GM12878 (cell line): ENCODE measurements at regions of chr12 and their contacts with region 1.

Region 1: DNA sequence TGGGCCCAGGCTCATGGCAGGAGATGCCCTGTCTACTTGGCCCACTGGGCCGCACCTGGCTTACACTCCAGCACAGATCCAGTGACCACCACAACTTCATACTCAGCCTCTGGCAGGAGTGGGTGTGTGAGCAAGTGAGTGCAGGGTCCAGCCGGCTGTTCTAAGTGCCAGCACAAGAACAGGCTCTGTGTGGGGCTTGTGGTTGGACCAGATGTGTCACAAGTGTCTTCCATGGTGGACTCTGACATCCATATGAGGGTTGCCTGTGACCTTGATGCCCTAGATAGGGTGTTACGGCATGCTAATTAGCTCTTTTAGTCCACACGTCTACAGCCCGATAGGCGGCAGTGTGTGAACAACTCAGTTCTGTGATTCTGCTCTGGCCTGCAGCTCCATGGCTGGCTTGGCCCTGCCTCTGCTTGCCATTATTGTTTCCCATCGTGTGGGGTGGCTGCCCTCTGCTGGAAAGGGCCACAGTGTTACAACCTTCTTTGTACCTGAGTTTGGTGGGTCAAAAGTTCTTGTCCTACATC is 1089.1 kb downstream of the SLC6A15 start:
- DNase-seq: no peak
- ATAC-seq: peak; percentile 97
- H3K4me3 ChIP-seq: no peak overlapping the region
- H3K27ac ChIP-seq: no peak overlapping the region
- H3K4me1 ChIP-seq: no peaks in the 10 kb centered on the region
- H3K27me3 ChIP-seq: no peaks in the 10 kb centered on the region
- CTCF ChIP-seq: peak; percentile 64 to 72 (median 71)
- EP300 ChIP-seq: no peak
- POLR2A ChIP-seq: no peak
- RAD21 ChIP-seq: peak; percentile 79

Region 2: DNA sequence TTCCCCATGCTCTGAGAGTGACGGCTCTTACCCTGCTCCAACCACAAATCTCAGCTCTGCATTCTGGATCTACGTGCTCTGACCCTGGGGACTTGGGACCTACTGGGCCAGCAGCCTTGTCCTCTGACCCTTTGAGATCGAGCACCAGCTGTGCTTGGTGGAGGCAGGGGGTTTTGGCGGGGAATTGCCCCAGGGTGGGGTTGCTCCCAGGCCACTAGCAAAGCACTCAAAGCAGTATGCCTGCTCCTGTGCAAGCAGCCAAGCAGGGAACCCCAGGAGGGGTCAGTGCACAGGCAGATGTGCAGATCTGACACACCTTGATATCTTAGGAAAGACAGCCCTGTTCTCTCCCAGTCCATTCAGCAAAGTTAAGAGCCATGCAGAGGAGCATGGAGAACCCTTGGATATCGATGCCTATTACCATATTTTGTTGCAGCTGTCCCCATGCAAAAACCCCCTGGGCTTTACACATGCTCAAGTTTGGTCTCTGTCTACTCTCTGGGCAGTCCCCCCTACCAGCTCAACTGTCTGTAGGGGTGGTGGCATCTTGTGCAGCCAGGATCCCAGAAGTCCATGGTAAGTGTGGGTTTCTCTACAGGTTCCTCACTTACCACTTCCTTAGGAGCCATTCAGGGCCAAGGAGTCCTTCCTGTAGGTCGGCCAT is 817.8 kb before region 1 on chr12:
- CTCF ChIA-PET with region 1: interaction called, 3 read pairs
- POLR2A ChIA-PET with region 1: no interaction called
- RAD21 ChIA-PET with region 1: no interaction called
- SMC1A ChIA-PET with region 1: no interaction called
- in situ Hi-C with region 1: loop called (anchors 25 kb)
- intact Hi-C with region 1: loop called (anchors 1 kb)
- DNase-seq: peak; percentile 16
- ATAC-seq: peak; percentile 91
- H3K4me3 ChIP-seq: no peak overlapping the region
- H3K27ac ChIP-seq: no peak overlapping the region
- H3K4me1 ChIP-seq: no peaks in the 10 kb centered on the region
- H3K27me3 ChIP-seq: no peaks in the 10 kb centered on the region
- CTCF ChIP-seq: no peak
- EP300 ChIP-seq: no peak
- POLR2A ChIP-seq: no peak
- RAD21 ChIP-seq: no peak

Region 3: GRCh38 chr12:83893101-83893500 is 69.6 kb after region 1 on chr12:
- CTCF ChIA-PET with region 1: no interaction called
- POLR2A ChIA-PET with region 1: no interaction called
- RAD21 ChIA-PET with region 1: no interaction called
- SMC1A ChIA-PET with region 1: no interaction called
- in situ Hi-C with region 1: no loop called
- intact Hi-C with region 1: no loop called
- DNase-seq: no peak
- ATAC-seq: no peak
- H3K4me3 ChIP-seq: no peak overlapping the region
- H3K27ac ChIP-seq: no peak overlapping the region
- H3K4me1 ChIP-seq: no peaks in the 10 kb centered on the region
- H3K27me3 ChIP-seq: no peaks in the 10 kb centered on the region
- CTCF ChIP-seq: no peak
- EP300 ChIP-seq: no peak
- POLR2A ChIP-seq: no peak
- RAD21 ChIP-seq: no peak

Region 4: DNA sequence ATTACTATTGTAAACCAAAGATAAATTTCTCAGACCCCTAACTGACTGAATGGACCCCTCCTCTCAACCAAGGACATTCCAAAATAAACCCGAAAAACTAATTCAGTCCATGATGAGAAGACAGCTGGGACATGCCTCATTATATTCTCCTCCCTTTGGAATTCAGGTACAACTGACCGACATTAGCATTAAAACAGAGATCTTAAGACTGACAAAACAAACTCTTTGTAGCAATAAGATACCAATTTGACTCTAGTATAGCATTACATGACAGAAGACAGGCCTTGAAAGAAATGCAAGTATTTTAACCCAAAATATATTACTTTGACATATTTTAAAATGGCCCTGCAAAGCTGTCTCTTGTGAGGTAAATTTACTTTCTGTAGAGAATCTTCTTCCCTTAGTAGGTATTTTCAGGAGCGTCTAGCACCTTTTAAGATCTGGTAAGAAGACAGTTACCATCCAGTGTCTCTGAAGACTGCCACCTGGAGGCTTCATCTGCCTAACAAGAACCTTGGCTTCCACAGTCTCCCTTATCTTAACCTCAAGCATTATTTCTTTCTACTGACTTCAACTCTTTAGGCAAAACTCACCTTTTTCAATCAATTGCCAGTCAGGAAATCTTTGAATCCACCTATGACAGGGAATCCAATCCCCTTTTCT is 131.6 kb after region 1 on chr12:
- CTCF ChIA-PET with region 1: interaction called, 25 read pairs
- POLR2A ChIA-PET with region 1: no interaction called
- RAD21 ChIA-PET with region 1: interaction called, 12 read pairs
- SMC1A ChIA-PET with region 1: interaction called, 6 read pairs
- in situ Hi-C with region 1: no loop called
- intact Hi-C with region 1: no loop called
- DNase-seq: no peak
- ATAC-seq: peak; percentile 59
- H3K4me3 ChIP-seq: no peak overlapping the region
- H3K27ac ChIP-seq: no peak overlapping the region
- H3K4me1 ChIP-seq: no peaks in the 10 kb centered on the region
- H3K27me3 ChIP-seq: no peaks in the 10 kb centered on the region
- CTCF ChIP-seq: peak in 2 of 3 experiments; percentile 19 to 31; a peak in 2 of 6 replicates
- EP300 ChIP-seq: no peak
- POLR2A ChIP-seq: no peak
- RAD21 ChIP-seq: no peak

Region 5: DNA sequence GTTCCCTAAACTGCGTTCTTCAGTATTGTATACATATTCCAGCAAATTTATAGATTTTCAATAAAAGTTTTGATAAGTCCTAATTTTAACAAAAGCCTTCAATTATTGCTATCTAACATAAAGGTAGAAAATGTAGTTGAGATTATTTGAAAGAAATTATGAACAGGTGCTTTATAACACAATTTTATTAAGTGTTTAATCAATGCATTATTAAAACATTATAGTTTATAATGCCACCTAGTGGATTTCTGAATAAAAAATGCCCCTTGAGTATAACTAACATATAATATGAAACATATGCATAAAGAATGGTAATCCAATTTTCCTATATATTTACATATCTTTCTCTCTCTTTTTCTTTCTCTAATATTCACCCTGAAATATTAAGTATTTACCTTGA is 573.8 kb after region 1 on chr12:
- CTCF ChIA-PET with region 1: interaction called, 19 read pairs
- POLR2A ChIA-PET with region 1: no interaction called
- RAD21 ChIA-PET with region 1: interaction called, 7 read pairs
- SMC1A ChIA-PET with region 1: interaction called, 5 read pairs
- in situ Hi-C with region 1: no loop called
- intact Hi-C with region 1: no loop called
- DNase-seq: no peak
- ATAC-seq: no peak
- H3K4me3 ChIP-seq: no peak overlapping the region
- H3K27ac ChIP-seq: no peak overlapping the region
- H3K4me1 ChIP-seq: no peaks in the 10 kb centered on the region
- H3K27me3 ChIP-seq: no peaks in the 10 kb centered on the region
- CTCF ChIP-seq: no peak; a peak in 1 of 6 replicates
- EP300 ChIP-seq: no peak
- POLR2A ChIP-seq: no peak
- RAD21 ChIP-seq: no peak

Region 6: GRCh38 chr12:84502907-84503787 is 679.6 kb after region 1 on chr12:
- CTCF ChIA-PET with region 1: interaction called, 82 read pairs
- POLR2A ChIA-PET with region 1: no interaction called
- RAD21 ChIA-PET with region 1: interaction called, 22 read pairs
- SMC1A ChIA-PET with region 1: interaction called, 16 read pairs
- in situ Hi-C with region 1: loop called (anchors 10 kb)
- intact Hi-C with region 1: loop called (anchors 1 kb)
- DNase-seq: no peak
- ATAC-seq: peak; percentile 96
- H3K4me3 ChIP-seq: no peak overlapping the region
- H3K27ac ChIP-seq: no peak overlapping the region
- H3K4me1 ChIP-seq: no peaks in the 10 kb centered on the region
- H3K27me3 ChIP-seq: no peaks in the 10 kb centered on the region; a peak in 1 of 4 replicates
- CTCF ChIP-seq: peak; percentile 64 to 74 (median 68)
- EP300 ChIP-seq: no peak
- POLR2A ChIP-seq: no peak
- RAD21 ChIP-seq: peak; percentile 84

Region 7: GRCh38 chr12:84551373-84551772 is 727.9 kb after region 1 on chr12:
- CTCF ChIA-PET with region 1: no interaction called
- POLR2A ChIA-PET with region 1: no interaction called
- RAD21 ChIA-PET with region 1: no interaction called
- SMC1A ChIA-PET with region 1: no interaction called
- in situ Hi-C with region 1: no loop called
- intact Hi-C with region 1: no loop called
- DNase-seq: no peak
- ATAC-seq: no peak
- H3K4me3 ChIP-seq: no peak overlapping the region
- H3K27ac ChIP-seq: no peak overlapping the region
- H3K4me1 ChIP-seq: no peaks in the 10 kb centered on the region
- H3K27me3 ChIP-seq: no peaks in the 10 kb centered on the region
- CTCF ChIP-seq: no peak
- EP300 ChIP-seq: no peak
- POLR2A ChIP-seq: no peak
- RAD21 ChIP-seq: no peak